ENCODE measurements at regions of chr16 and their contacts with region 1.

Region 1: DNA sequence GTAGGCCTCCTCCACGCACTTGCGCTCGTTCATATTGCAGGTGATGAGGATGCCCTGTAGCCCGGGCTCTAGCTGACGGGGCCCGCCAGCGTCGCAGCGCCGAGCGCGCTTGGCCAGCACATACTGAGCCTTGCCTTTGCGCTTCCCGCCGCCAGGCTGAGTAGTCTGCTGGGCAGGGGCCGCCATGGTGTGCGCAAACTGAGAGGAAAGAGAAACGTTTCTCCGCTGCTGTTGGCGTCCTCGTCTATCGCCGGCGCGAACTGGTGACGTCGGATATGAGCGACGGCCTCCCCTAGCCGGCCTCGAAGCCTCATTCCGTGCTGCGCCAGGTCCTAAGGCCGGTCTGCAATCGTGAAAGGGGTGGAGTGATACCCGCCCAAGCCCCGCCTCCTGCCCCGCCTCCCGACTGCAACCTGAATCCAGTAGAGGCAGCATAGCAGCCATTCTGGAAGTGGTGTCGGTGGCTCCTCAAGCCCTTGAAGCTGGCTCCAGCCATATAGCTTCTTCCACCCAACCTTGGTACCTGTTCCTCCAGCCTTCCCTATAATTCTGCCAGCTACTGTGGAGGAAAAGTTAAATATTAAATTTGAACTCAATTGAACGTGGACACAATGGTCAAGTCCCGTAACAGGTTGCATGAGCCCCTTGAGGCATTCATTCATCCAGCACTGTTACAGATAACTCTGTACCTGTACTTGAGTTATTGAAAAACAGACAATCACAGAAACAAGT is at the start of gene THUMPD1:
- DNase-seq: peak; percentile 96 to 98
- ATAC-seq: peak; percentile 92 to 98 (median 92)
- H3K4me3 ChIP-seq: peak within 1 kb of the TSS; percentile 100
- H3K4me3 Mint-ChIP-seq: peak within 1 kb of the TSS; percentile 96
- H3K27ac ChIP-seq: peak within 1 kb of the TSS; percentile 99
- H3K27ac Mint-ChIP-seq: peak within 1 kb of the TSS; percentile 90 to 94
- H3K4me1 ChIP-seq: peaks cover 22% of the 10 kb centered on the region
- H3K4me1 Mint-ChIP-seq: peaks cover 15 to 30% of the 10 kb centered on the region in 2 donors
- H3K27me3 ChIP-seq: no peaks in the 10 kb centered on the region
- H3K27me3 Mint-ChIP-seq: no peaks in the 10 kb centered on the region
- CTCF ChIP-seq: no peak
- total RNA-seq, gene THUMPD1: 86.1 to 92.2 (median 87.1) TPM

Region 2: DNA sequence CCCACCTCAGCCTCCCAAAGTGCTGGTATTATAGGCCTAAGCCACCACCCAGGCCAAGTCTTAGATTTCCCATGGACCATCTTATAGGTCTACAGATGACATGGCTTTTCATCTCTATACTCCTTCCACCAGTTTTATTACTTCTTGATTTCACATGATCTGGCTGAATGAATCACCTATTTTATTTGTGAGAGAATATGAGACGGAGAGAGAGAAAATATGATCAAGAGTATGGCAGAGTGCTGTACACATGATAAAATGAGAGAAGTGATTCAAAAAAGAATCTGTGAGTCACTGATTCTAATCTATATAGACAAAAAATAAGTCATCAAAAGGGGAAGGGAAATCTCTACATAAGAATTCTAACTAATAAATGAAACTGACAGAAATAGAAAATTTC is 57.9 kb before region 1 on chr16:
- intact Hi-C with region 1: no loop called
- DNase-seq: no peak
- ATAC-seq: no peak
- H3K4me3 ChIP-seq: no peak overlapping the region
- H3K4me3 Mint-ChIP-seq: no peak overlapping the region
- H3K27ac ChIP-seq: no peak overlapping the region
- H3K27ac Mint-ChIP-seq: no peak overlapping the region
- H3K4me1 ChIP-seq: no peaks in the 10 kb centered on the region
- H3K4me1 Mint-ChIP-seq: no peaks in the 10 kb centered on the region
- H3K27me3 ChIP-seq: no peaks in the 10 kb centered on the region
- H3K27me3 Mint-ChIP-seq: peaks cover 0 to 9% of the 10 kb centered on the region in 2 donors
- CTCF ChIP-seq: no peak

Region 3: GRCh38 chr16:20763461-20764232 is 21.9 kb after region 1 on chr16 and contains the start of gene ACSM3:
- intact Hi-C with region 1: loop called (anchors 1 kb)
- DNase-seq: peak; percentile 47 to 86
- ATAC-seq: peak; percentile 96 to 98 (median 97)
- H3K4me3 ChIP-seq: peak within 1 kb of the TSS; percentile 45
- H3K4me3 Mint-ChIP-seq: peak within 1 kb of the TSS; percentile 97
- H3K27ac ChIP-seq: peak within 1 kb of the TSS; percentile 76
- H3K27ac Mint-ChIP-seq: peak within 1 kb of the TSS; percentile 82 to 92
- H3K4me1 ChIP-seq: peaks cover 4% of the 10 kb centered on the region
- H3K4me1 Mint-ChIP-seq: peaks cover 15 to 24% of the 10 kb centered on the region in 2 donors
- H3K27me3 ChIP-seq: no peaks in the 10 kb centered on the region
- H3K27me3 Mint-ChIP-seq: no peaks in the 10 kb centered on the region
- CTCF ChIP-seq: no peak
- total RNA-seq, gene ACSM3: 3.7 to 4.4 (median 4.4) TPM

Region 4: DNA sequence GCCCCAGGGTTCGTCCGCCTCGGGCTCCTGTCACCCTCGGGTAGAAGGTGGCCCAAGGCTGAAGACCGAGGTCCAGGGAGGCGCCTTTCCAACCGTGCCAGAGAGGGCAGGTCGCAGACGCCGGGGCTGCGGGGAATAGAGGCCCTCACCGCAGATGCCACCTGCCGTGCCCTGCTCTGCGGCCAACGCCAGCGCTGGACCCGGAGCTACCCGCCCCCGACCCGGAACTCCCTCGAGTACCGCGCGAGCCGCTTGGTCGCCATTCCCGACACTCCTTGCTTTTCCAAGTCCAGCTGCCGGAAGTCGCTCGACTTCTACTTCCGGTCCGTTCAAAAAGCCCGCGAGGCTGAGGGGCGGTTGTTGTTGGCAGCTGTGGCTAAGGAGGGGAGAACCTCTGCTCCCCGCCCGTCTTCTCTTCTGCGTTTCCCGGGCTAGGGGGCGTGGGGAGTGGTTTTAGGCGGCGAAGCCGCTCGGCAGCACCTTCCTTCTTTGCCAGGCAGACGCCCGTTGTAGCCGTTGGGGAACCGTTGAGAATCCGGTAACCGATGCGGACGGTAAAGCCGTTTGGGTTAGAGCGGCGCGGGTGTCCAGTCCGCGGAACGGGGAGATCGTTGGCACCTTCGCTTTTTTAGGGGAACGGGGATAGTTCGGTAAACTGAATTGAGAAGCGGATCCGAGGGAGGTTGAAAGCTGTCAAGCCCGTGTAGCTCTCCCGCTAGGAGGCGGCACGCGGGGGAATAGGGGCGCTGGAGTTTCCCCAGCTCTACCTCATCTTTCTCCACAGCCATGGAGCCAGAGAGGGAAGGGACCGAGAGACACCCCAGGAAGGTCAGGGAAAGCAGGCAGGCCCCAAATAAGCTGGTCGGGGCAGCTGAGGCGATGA is 64.7 kb after region 1 on chr16 and contains the starts of genes ERI2 and REXO5:
- intact Hi-C with region 1: loop called (anchors 1 kb)
- DNase-seq: peak; percentile 66 to 83
- ATAC-seq: peak; percentile 79 to 86 (median 84)
- H3K4me3 ChIP-seq: peak within 1 kb of the TSS; percentile 87
- H3K4me3 Mint-ChIP-seq: peak within 1 kb of the TSS; percentile 99
- H3K27ac ChIP-seq: peak within 1 kb of the TSS; percentile 71
- H3K27ac Mint-ChIP-seq: peak within 1 kb of the TSS; percentile 94 to 97
- H3K4me1 ChIP-seq: peaks cover 18% of the 10 kb centered on the region
- H3K4me1 Mint-ChIP-seq: peaks cover 25% of the 10 kb centered on the region in 2 donors
- H3K27me3 ChIP-seq: no peaks in the 10 kb centered on the region
- H3K27me3 Mint-ChIP-seq: no peaks in the 10 kb centered on the region
- CTCF ChIP-seq: no peak
- total RNA-seq, gene ERI2: 2.4 to 3.5 (median 2.8) TPM
- total RNA-seq, gene REXO5: 1.5 to 6.0 (median 1.7) TPM

Region 5: DNA sequence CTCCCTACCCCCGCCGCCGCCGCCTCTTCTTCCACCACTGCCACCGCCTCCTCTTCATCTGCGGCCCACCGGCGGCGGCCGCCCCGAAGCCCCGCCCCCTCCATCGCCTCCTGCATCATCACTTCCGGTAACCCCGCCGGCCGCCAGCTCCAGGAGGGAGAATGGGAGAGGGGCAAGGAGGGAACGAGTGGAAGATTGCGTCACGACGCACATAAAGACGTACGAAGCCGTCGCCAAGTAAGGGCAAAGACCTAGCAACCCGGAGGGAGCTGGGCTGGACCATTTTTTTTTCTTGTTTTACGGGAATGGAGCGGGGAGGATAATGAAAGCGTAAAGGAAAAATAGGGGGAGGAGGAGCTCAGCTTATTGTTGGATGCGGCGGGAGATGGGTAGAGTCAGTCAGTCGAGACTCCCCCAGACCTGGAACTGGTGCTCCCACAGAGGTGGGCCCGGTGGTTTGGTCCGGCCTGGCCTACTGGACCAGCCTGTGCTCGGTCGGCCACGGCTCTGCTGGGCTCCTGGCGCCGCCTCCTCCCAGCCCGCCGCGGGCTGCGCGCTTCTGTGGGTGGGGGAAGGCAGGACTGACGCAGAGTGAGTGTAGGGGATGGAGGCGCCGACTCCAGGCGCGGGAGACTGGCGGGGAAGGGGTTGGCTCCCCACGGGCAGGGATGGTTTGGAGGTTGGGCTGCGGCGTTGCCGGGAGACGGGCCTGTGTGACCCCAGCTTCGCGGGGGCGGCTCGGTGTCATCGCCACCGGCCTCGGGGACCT is 158.8 kb after region 1 on chr16 and contains the starts of genes DCUN1D3 and LYRM1:
- intact Hi-C with region 1: loop called (anchors 2 kb)
- DNase-seq: peak; percentile 80 to 94
- ATAC-seq: peak; percentile 73 to 83 (median 79)
- H3K4me3 ChIP-seq: peak within 1 kb of the TSS; percentile 74
- H3K4me3 Mint-ChIP-seq: peak within 1 kb of the TSS; percentile 94
- H3K27ac ChIP-seq: peak within 1 kb of the TSS; percentile 94
- H3K27ac Mint-ChIP-seq: peak within 1 kb of the TSS; percentile 92 to 96
- H3K4me1 ChIP-seq: peaks cover 33% of the 10 kb centered on the region
- H3K4me1 Mint-ChIP-seq: peaks cover 69% of the 10 kb centered on the region in 2 donors
- H3K27me3 ChIP-seq: no peaks in the 10 kb centered on the region
- H3K27me3 Mint-ChIP-seq: no peaks in the 10 kb centered on the region
- CTCF ChIP-seq: no peak
- total RNA-seq, gene DCUN1D3: 5.3 to 9.3 (median 6.1) TPM
- total RNA-seq, gene LYRM1: 15.3 to 25.7 (median 17.2) TPM